Activated naive CD4-positive, alpha-beta T cell treated with anti-CD3 and anti-CD28 coated beads for 36 hours (primary cell): ENCODE measurements at regions of chr14 and their contacts with region 1.

Region 1: DNA sequence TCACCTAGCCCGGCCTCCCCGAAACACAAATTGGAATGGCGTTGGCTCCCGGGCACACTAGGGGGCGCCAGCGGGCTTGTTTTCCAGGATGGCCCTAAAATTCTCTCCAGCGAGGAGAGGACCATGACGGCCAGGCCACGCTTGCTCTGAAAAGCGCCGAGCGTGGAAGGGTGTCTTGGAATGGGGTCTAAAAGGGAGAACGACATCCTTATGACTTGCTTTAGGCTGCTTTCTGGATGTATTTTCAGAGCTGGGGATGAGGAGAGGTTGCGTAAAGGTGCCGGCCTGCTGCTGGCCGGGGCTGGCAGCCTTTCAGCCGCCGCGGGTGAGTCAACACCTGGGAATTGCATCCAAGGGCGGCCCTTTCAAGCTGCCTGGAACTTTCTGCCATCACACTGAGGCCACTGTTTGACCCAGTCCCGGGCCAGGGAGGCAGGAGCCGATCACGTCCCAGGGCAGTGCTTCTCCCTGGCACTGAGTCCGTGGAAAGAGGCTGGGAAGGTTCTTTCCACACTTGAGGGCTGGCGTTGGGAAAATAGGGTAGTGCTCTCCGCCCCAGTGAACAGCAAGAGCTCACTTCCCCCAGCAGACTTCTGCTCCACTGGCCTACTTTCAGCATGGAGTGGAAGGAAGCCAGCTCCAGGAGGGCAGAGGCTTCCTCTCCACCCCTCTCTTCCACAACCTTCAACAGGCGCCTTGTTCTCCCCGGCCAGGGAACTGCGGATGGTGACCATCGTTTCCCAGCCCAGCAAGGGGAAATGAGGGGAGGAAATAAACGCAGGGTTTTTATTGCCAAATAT is 216.2 kb downstream of the TTC8 start:
- DNase-seq: peak; percentile 91
- H3K4me3 Mint-ChIP-seq: peak overlapping the region; percentile 70
- H3K27ac Mint-ChIP-seq: no peak overlapping the region
- H3K4me1 Mint-ChIP-seq: peaks cover 12% of the 10 kb centered on the region
- H3K27me3 Mint-ChIP-seq: peaks cover 8% of the 10 kb centered on the region

Region 2: GRCh38 chr14:89107626-89108025 is 67.0 kb after region 1 on chr14:
- CTCF ChIA-PET with region 1: no interaction called
- intact Hi-C with region 1: no loop called
- DNase-seq: no peak
- H3K4me3 Mint-ChIP-seq: no peak overlapping the region
- H3K27ac Mint-ChIP-seq: no peak overlapping the region
- H3K4me1 Mint-ChIP-seq: no peaks in the 10 kb centered on the region
- H3K27me3 Mint-ChIP-seq: peaks cover 6% of the 10 kb centered on the region

Region 3: DNA sequence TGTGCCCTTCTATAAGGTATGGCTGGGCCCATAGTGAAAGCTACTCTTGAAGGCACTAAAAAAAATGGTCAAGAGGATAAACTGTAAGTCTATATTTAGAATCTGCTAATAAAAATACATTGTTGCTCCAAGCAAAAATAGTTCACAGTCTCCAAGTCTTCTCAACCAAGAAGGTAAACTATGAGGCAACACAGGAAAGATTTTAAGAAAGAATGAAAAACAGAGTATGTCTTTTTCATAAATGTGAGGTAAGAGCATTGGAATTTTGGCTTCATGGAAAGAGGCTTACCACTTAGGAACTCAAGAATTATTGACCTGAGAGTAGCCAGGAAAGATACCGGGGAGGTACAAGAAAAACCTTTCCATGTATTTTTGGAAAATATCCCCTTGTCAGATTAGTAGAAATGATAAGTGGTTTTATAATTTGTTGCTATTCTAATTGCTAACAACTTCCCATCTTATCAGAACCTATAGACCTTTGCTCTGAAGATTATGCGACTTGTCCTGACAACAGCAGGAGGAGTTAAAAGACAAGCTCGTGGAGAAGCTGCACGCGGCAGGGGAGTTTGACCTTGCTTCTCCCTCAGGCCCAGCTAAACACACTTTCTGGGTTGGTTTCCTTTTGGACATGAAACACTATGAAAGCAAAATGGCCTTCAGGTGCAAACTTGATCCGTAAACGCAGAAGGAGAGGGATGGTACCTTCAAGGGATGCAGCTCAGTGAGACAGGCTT is 138.3 kb after region 1 on chr14:
- CTCF ChIA-PET with region 1: no interaction called
- intact Hi-C with region 1: loop called (anchors 10 kb)
- DNase-seq: no peak
- H3K4me3 Mint-ChIP-seq: no peak overlapping the region
- H3K27ac Mint-ChIP-seq: no peak overlapping the region
- H3K4me1 Mint-ChIP-seq: peaks cover 9% of the 10 kb centered on the region
- H3K27me3 Mint-ChIP-seq: no peaks in the 10 kb centered on the region

Region 4: GRCh38 chr14:89899917-89900663 is 859.4 kb after region 1 on chr14:
- CTCF ChIA-PET with region 1: interaction called, 4 read pairs
- intact Hi-C with region 1: loop called (anchors 1 kb)
- DNase-seq: peak; percentile 16
- H3K4me3 Mint-ChIP-seq: no peak overlapping the region
- H3K27ac Mint-ChIP-seq: no peak overlapping the region
- H3K4me1 Mint-ChIP-seq: peaks cover 13% of the 10 kb centered on the region
- H3K27me3 Mint-ChIP-seq: peaks cover 2% of the 10 kb centered on the region